Activated T-helper 2 cell treated with anti-CD3 and anti-CD28 coated beads, Interferon-gamma antibody, Interleukin-2, Interleukin-4, amounts not matched to agents 10 μg/mL and 5 μg/mL and 100 μg/mL, durations not matched to agents 14 hours and 24 hours and 36 hours (primary cell): ENCODE measurements at regions of chr13 and their contacts with region 1.

Region 1: GRCh38 chr13:52194184-52194868 is 34.9 kb upstream of the NEK3 start:
- DNase-seq: peak; percentile 88
- H3K4me3 Mint-ChIP-seq: peak overlapping the region; percentile 95
- H3K27ac Mint-ChIP-seq: peak overlapping the region; percentile 96
- H3K4me1 Mint-ChIP-seq: peaks cover 9% of the 10 kb centered on the region
- H3K27me3 Mint-ChIP-seq: no peaks in the 10 kb centered on the region

Region 2: DNA sequence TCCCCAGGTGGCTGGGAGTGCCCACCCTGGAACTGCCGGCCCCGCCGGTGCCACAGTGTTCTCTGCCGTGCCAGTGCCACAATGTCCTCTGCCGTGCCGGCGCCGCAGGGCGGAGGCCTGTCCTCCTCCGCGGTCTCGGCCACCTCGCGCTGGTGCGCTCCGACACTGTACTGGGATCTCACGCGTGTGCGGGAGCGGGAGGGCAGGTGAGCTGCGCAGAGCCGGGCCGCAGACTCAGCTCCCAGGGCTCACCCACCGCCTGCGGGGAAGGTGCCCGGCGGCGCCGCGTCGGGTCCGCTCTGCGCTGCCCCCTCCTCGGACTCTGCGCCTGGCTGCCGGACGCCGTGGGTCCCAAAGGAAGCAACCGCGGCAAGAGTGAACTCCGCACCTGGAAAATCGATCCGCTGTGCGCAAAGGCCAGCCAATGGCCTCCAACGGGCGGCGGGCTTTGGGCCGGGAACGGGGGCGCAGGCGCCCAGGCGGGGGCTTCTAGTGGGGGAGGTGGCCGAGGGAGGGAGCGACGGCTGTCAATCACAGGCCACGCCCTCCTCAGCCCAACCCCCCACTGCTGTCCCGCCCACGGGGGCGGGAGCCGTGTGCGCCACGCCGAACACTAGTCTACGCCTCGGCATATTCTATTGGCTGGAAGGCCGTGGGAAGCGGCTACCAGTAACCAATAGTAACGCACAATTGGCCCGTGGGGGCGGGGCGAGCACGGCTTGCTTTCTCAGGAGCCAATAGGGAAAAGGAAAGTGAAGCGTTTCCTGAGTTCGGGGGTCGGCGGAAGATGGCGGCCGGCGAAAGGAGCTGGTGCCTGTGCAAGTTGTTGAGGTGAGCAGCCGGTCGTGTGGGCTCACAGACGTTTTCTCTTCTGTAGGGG is 182.5 kb before region 1 on chr13 and contains the start of gene ALG11:
- intact Hi-C with region 1: loop called (anchors 1 kb)
- DNase-seq: peak; percentile 99
- H3K4me3 Mint-ChIP-seq: peak within 1 kb of the TSS; percentile 94
- H3K27ac Mint-ChIP-seq: peak within 1 kb of the TSS; percentile 86
- H3K4me1 Mint-ChIP-seq: peaks cover 9% of the 10 kb centered on the region
- H3K27me3 Mint-ChIP-seq: peaks cover 35% of the 10 kb centered on the region
- total RNA-seq, gene ALG11: 21.5 and 21.9 TPM in 2 replicates

Region 3: DNA sequence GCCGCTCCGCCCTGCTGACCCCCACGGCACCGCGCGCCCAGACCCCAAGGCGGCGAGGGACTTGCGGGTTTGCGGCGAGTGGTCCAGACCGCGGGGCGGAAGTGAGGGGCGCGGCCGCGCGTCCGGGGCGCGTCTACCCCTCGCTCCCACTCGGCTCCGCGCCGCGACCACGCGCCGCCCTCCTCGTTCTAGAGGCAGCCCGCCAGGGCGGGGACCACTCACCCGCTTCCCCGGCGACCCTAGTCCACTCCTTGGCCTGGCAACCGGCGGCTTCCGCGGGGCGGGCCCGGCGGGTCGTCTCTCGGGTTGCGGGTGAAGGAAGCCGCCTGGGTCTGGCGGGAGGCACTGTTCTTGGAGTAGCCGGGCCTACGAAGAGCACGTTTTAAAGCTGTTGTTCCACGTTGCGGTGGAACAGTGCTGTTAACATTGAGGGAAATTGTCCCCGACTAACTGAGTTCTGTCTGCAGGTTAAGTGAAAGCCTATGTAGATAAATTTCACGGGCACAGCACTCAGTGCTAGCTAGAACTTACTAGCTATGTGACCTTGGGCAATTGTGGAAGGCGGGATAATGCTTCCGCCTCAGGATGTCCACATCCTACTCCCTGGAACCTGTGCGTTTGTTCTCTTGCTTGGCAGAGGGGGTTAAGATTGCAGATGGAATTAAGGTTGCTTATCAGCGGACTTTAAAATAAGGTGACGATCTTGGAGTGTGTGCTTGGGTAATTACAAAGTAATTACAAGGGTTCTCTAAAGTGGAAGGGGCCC is 34.8 kb before region 1 on chr13 and contains the start of gene NEK3:
- intact Hi-C with region 1: loop called (anchors 2 kb)
- DNase-seq: peak; percentile 53
- H3K4me3 Mint-ChIP-seq: peak within 1 kb of the TSS; percentile 80
- H3K27ac Mint-ChIP-seq: peak within 1 kb of the TSS; percentile 67
- H3K4me1 Mint-ChIP-seq: peaks cover 46% of the 10 kb centered on the region
- H3K27me3 Mint-ChIP-seq: peaks cover 3% of the 10 kb centered on the region
- total RNA-seq, gene NEK3: 9.4 and 10.0 TPM in 2 replicates

Region 4: DNA sequence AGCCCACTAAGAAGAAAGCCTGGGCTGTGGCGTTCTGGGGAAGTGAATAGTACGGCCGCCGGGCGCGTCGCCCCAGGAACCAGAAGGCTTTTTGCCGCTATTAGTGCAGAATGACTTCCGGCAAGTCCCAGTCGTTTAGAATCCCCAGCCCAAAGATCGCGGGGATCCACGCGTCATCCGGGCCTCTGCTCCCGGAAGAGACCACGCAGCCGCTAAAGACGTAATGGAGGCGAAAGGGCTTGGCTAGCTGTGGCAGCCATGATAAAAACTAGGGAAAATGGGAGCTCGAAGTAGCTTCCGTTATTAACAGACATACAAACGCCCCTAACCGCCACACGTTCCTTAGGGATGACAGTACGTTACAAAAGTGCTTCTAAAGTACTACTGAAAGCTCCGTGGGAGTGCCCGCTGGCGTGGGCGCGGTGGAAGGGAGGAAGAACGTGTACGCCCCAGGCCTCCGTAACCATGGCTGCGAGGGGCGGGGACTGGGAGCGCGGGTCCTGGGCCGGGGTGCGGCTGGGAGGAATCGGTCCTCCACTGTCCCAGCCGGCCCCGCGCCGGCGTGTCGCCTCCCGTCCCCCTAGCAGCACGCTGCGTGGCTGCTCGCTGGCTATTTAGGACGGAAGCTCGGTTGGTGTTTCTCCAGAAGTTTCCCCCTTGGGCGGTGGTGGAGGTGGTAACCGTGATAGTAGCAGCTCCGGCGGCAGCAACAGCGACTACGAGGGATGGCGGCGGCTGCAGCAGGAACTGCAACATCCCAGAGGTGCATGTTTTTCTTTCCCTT is 458.1 kb after region 1 on chr13 and contains the start of gene SUGT1:
- intact Hi-C with region 1: loop called (anchors 2 kb)
- DNase-seq: peak; percentile 94
- H3K4me3 Mint-ChIP-seq: no peak within 1 kb of the TSS
- H3K27ac Mint-ChIP-seq: no peak within 1 kb of the TSS
- H3K4me1 Mint-ChIP-seq: peaks cover 14% of the 10 kb centered on the region
- H3K27me3 Mint-ChIP-seq: no peaks in the 10 kb centered on the region
- total RNA-seq, gene SUGT1: 66.5 and 72.3 TPM in 2 replicates